AG04450 (cell line): ENCODE measurements at regions of chr7 and their contacts with region 1.

Region 1: DNA sequence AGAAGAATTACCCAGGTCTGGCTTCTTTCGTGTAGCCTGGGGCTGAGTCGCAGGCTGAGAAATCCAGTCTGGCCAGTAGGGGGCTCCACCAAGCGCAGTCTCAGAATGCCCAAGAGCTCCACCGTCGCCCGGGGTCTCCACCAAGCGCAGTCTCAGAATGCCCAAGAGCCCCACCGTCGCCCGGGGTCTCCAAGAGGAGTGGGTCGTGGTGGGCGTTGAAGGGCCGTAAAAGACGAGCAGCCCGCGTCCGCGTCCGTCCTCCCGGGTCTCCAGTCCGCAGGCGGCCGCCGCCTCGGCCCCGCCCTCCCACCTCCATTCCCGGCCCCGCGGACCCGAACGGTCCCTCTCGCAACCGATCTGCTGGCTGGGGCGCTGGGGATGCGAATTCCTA is 895 bp upstream of the ZYX start:
- DNase-seq: peak; percentile 68
- H3K4me3 ChIP-seq: peak overlapping the region; percentile 93
- H3K27ac ChIP-seq: peak overlapping the region; percentile 100
- H3K27me3 ChIP-seq: no peaks in the 10 kb centered on the region
- CTCF ChIP-seq: peak; percentile 89

Region 2: GRCh38 chr7:143263266-143264195 is 116.7 kb before region 1 on chr7 and contains the start of gene GSTK1:
- CTCF ChIA-PET with region 1: interaction called, 6 read pairs
- POLR2A ChIA-PET with region 1: interaction called, 20 read pairs
- DNase-seq: peak; percentile 16
- H3K4me3 ChIP-seq: peak within 1 kb of the TSS; percentile 86
- H3K27ac ChIP-seq: peak within 1 kb of the TSS; percentile 31
- H3K27me3 ChIP-seq: no peaks in the 10 kb centered on the region
- CTCF ChIP-seq: no peak
- polyA plus RNA-seq, gene GSTK1: 100 and 116 TPM in 2 replicates

Region 3: DNA sequence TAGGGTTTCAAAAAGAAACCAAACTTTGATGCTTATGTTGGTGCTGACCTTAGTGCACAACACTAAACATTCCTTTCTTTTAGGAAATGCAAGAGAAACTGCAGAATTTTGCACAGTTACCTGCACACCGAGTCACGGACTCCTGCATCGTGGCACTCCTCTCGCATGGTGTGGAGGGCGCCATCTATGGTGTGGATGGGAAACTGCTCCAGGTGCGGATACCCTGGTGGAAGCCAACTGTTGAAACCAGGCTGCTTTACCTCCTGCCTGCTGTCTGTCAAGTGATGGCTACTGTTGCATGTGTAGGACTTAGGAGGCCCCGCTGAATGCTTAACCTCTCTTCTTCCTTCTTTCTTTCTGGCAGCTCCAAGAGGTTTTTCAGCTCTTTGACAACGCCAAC is 80.4 kb before region 1 on chr7:
- CTCF ChIA-PET with region 1: interaction called, 22 read pairs
- POLR2A ChIA-PET with region 1: interaction called, 4 read pairs
- DNase-seq: no peak
- H3K4me3 ChIP-seq: no peak overlapping the region
- H3K27ac ChIP-seq: no peak overlapping the region
- H3K27me3 ChIP-seq: no peaks in the 10 kb centered on the region
- CTCF ChIP-seq: peak; percentile 47

Region 4: GRCh38 chr7:143362131-143363015 is 17.9 kb before region 1 on chr7 and contains the start of gene FAM131B:
- CTCF ChIA-PET with region 1: interaction called, 20 read pairs
- POLR2A ChIA-PET with region 1: no interaction called
- DNase-seq: no peak
- H3K4me3 ChIP-seq: peak within 1 kb of the TSS; percentile 69
- H3K27ac ChIP-seq: no peak within 1 kb of the TSS
- H3K27me3 ChIP-seq: peaks cover 38% of the 10 kb centered on the region
- CTCF ChIP-seq: no peak
- polyA plus RNA-seq, gene FAM131B: 3.1 and 4.2 TPM in 2 replicates

Region 5: DNA sequence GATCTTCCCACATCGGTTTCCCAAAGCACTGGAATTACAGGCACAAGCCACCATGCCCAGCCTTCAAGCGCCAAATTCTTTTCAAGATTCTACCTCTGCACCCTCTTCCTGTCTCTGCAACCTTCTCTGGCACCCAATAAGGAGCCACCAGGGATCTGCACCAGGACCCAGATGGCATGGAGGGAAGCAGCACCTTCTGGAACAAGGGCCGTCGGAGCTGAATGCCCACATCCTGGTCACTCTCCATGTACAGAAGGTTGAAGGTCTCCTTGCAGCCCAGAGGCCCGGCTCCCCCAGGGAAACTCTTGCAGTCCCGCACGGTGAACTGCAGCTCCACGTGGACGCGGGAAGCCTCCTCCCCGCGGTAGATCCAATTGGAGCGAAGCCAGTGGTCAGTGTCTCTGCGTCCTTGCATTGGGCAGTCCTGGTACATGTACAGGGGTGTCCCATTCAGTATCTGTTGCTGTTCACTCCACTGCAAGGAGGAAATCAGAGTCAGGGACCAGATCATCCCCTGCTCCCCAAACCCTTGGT is 20.9 kb after region 1 on chr7:
- CTCF ChIA-PET with region 1: interaction called, 32 read pairs
- POLR2A ChIA-PET with region 1: interaction called, 19 read pairs
- DNase-seq: no peak
- H3K4me3 ChIP-seq: no peak overlapping the region
- H3K27ac ChIP-seq: no peak overlapping the region
- H3K27me3 ChIP-seq: peaks cover 16% of the 10 kb centered on the region
- CTCF ChIP-seq: no peak

Region 6: GRCh38 chr7:143416565-143417149 is 36.4 kb after region 1 on chr7:
- CTCF ChIA-PET with region 1: interaction called, 12 read pairs
- POLR2A ChIA-PET with region 1: no interaction called
- DNase-seq: no peak
- H3K4me3 ChIP-seq: no peak overlapping the region
- H3K27ac ChIP-seq: no peak overlapping the region
- H3K27me3 ChIP-seq: no peaks in the 10 kb centered on the region
- CTCF ChIP-seq: peak; percentile 82